Calu3 (cell line): ENCODE measurements at regions of chr1 and their contacts with region 1.

Region 1: DNA sequence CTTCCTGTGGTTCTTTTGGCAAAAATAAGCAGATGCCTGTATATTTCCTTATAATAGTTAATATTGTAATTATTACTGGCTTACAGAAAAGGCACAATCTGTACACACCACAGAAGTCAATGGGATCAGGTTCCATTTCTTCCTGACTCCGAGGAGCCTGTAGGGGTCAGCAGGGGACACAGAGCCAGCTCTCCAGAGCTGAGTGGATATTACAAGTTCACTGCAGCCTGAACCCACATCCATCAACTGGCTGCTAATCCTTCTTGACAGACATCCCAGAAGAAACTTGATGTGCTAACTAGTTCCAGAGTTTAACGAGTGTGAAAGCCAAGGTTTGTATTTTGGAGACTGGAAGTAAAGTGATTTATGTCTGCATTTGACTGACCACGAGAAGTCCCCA is 203.8 kb downstream of the LMX1A start:
- DNase-seq: peak; percentile 53
- H3K4me3 Mint-ChIP-seq: no peak overlapping the region
- H3K27ac Mint-ChIP-seq: no peak overlapping the region
- H3K4me1 Mint-ChIP-seq: no peaks in the 10 kb centered on the region
- H3K27me3 Mint-ChIP-seq: peaks cover 21% of the 10 kb centered on the region
- CTCF ChIP-seq: no peak

Region 2: GRCh38 chr1:165138967-165139366 is 13.8 kb before region 1 on chr1:
- CTCF ChIA-PET with region 1: no interaction called
- intact Hi-C with region 1: no loop called
- DNase-seq: no peak
- H3K4me3 Mint-ChIP-seq: no peak overlapping the region
- H3K27ac Mint-ChIP-seq: no peak overlapping the region
- H3K4me1 Mint-ChIP-seq: no peaks in the 10 kb centered on the region
- H3K27me3 Mint-ChIP-seq: peaks cover 83% of the 10 kb centered on the region
- CTCF ChIP-seq: no peak

Region 3: GRCh38 chr1:165222580-165222979 is 69.9 kb after region 1 on chr1:
- CTCF ChIA-PET with region 1: no interaction called
- intact Hi-C with region 1: loop called (anchors 5 kb)
- DNase-seq: no peak
- H3K4me3 Mint-ChIP-seq: no peak overlapping the region
- H3K27ac Mint-ChIP-seq: no peak overlapping the region
- H3K4me1 Mint-ChIP-seq: peaks cover 8% of the 10 kb centered on the region
- H3K27me3 Mint-ChIP-seq: peaks cover 34% of the 10 kb centered on the region
- CTCF ChIP-seq: no peak